PC-9 (cell line): ENCODE measurements at regions of chr14 and their contacts with region 1.

Region 1: DNA sequence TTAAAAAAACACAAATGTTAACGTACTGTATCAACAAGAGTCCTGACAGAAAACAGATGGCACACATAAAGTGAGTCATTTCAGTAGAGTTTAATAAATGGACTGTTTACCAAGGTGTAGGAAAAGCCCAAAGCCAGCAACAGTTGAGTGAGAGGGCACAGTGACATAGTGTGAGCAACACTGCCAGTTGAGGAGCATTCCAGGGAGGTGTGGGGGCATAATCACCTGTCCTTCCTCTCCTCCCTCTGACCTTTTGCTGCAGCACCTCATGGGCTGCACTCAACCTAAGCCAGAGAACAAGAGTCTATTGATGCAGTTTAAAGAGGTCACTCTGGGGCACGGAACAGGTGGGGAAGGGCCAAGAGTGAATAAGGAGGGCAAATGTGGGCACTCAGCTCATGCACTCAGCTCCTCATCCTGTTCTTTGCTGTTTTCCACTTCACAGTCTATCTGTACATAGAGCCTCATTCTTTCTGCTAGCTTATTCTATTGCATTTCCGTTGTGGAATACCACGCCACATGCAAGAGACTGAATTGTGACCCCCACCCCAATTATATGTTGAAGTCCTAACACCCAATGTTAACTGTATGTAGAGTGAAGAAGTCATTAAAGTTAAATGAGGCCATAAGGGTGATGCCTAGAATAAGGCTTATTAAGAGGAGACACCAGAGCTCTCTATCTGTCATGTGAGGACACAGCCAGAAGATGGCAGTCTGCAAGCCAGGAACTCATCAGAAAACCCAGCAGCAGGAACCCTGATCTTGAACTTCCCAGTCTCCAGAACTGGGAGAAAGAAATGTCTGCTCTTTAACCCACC is 29.4 kb downstream of the DHRS2 start:
- DNase-seq: peak; percentile 37 to 73
- H3K4me3 ChIP-seq: no peak overlapping the region
- H3K27ac ChIP-seq: peak overlapping the region; percentile 63
- H3K4me1 ChIP-seq: peaks cover 31% of the 10 kb centered on the region
- H3K27me3 ChIP-seq: no peaks in the 10 kb centered on the region
- CTCF ChIP-seq: peak; percentile 66

Region 2: DNA sequence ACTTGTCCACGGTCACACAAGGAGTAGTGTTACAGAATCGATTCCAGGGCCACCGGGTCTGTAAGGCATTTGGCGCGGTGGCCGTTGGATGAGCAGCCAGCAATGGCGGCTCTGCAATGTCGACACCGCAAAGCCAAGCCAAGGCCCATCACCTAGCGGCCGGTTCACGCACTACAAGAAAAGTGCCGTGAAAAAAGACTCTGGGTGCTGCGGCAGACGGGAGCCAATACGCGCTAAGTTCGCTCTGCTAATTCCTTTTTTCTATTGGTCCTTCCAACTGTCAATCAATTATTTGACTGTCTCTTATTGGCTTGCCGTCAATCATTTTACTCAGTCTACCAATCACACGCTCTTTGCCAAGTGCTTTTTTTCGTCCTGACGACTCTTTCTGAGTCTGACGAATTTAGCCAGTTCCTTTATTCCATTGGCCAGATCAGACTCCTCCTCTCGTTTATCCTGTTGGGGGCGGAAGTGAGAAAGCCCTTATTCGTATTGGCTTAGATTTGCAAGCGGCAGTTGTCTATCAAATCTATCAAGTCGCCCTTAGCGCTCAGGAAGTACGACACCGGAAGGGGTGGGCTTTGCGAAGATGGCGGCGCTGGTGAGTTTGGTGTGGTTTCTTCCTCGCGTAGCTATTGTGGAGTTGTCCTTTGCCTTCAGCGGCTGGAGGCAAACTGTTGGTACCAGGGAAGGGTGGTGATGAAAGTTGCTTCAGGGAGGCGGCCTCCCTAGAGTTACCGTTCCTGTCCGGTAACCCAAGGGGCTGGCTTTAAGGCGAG is 196.3 kb before region 1 on chr14 and contains the start of gene NGDN:
- CTCF ChIA-PET with region 1: no interaction called
- POLR2A ChIA-PET with region 1: no interaction called
- intact Hi-C with region 1: no loop called
- DNase-seq: peak; percentile 82 to 98
- H3K4me3 ChIP-seq: peak within 1 kb of the TSS; percentile 65
- H3K27ac ChIP-seq: peak within 1 kb of the TSS; percentile 35; the same call in 1 of the 2 replicates
- H3K4me1 ChIP-seq: peaks cover 5% of the 10 kb centered on the region
- H3K27me3 ChIP-seq: no peaks in the 10 kb centered on the region
- CTCF ChIP-seq: peak; percentile 73
- total RNA-seq, gene NGDN: 23.1 and 27.6 TPM in 2 replicates

Region 3: DNA sequence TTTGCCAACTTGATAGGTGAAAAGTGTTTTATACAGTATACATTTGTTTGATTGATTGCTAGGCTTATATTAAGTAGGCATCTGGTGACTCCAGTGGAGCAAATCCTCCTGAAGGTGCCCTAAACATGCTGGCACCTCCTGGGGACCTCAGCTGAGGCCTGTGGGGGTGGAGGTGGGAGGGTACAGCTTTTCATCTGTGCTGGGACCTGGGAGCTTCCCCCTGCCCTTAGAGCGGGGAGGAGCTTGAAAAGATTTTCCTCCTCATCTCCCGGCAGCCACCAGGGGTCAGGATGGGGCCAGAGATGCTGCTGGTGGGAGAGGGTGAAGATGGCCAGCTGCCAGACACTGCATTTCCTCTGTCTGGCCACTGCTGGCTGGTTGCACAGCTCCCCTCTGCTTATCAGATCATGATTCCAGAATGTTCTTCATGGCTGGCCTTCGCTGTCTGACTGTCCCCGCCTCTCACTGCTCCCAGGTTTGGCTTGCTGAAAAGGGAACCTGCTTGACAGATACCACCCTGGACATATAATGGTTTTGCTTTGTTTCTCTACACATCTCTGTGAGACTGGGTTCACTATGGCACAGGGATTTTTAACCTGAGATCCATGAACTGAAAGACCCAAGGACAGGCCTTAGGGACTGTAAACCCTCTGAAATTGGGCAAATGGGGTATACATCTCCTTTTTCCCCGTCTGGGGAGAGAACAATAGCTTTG is 76.5 kb before region 1 on chr14:
- CTCF ChIA-PET with region 1: interaction called, 6 read pairs
- POLR2A ChIA-PET with region 1: no interaction called
- intact Hi-C with region 1: loop called (anchors 2 kb)
- DNase-seq: peak; percentile 62 to 83
- H3K4me3 ChIP-seq: no peak overlapping the region
- H3K27ac ChIP-seq: no peak overlapping the region
- H3K4me1 ChIP-seq: peaks cover 7% of the 10 kb centered on the region; the same call in 1 of the 2 replicates
- H3K27me3 ChIP-seq: no peaks in the 10 kb centered on the region
- CTCF ChIP-seq: peak; percentile 78

Region 4: GRCh38 chr14:23631702-23632460 is 33.7 kb before region 1 on chr14:
- CTCF ChIA-PET with region 1: interaction called, 9 read pairs
- POLR2A ChIA-PET with region 1: no interaction called
- intact Hi-C with region 1: loop called (anchors 5 kb)
- DNase-seq: peak; percentile 37 to 70
- H3K4me3 ChIP-seq: no peak overlapping the region
- H3K27ac ChIP-seq: no peak overlapping the region
- H3K4me1 ChIP-seq: peaks cover 8% of the 10 kb centered on the region
- H3K27me3 ChIP-seq: no peaks in the 10 kb centered on the region
- CTCF ChIP-seq: peak; percentile 89

Region 5: DNA sequence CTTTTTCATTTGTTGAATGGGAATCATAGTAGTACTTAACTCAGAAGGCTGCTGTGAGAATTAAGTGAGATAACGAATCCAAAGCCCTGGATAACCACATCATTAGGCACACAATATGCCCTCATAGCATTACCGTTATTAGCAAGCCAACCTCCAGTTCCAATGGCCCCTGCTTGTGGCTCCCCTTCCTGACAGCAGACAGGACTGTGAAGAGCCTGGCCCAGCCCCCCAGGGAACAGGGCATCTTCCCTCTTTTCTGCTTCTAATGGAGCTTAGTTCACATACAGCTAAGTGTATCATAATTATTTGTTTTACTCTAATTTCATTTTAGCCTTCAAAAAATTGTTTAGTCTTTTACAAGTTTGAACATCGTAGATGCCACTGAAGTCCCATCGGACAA is 10.3 kb after region 1 on chr14:
- CTCF ChIA-PET with region 1: interaction called, 20 read pairs
- POLR2A ChIA-PET with region 1: no interaction called
- intact Hi-C with region 1: no loop called
- DNase-seq: no peak
- H3K4me3 ChIP-seq: no peak overlapping the region
- H3K27ac ChIP-seq: no peak overlapping the region
- H3K4me1 ChIP-seq: no peaks in the 10 kb centered on the region
- H3K27me3 ChIP-seq: no peaks in the 10 kb centered on the region
- CTCF ChIP-seq: no peak

Region 6: DNA sequence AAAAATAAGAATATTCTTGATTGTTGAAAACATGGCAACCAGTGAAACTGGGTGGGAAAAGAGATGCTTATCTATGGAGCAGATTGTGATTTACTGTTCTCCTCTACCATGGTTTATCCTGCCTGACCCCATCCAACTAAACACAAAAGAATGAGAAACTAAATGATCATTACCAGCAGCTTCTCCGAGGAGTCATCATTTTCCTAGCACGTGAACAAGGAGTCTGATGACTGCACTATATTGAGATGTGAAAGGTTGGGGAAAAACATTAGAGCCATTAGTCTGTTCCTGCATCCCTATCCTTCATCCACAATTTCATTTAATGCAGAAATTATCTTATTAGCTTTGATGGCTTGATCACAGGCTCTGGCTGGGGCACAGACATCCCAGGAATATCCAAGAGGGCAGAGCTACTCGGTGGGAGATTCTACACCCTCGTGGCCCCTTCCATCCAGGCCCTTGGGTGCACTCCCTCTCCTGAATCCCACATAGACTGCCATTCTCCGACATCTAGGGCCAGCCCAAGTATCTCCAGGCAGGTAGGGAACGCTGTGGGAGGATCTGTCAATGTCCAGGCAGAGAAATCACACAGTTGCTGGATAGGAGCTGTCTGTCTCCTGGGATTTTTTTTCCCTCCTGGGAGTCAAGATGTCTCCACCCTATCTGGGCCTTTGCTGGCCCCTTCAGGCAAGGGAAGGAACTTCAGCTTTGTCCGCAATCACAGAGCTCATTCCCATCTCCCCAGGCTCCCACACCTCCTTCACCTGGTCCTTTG is 244.7 kb after region 1 on chr14:
- CTCF ChIA-PET with region 1: interaction called, 11 read pairs
- POLR2A ChIA-PET with region 1: no interaction called
- intact Hi-C with region 1: loop called (anchors 1 kb)
- DNase-seq: peak in 1 of 2 experiments; percentile 56
- H3K4me3 ChIP-seq: no peak overlapping the region
- H3K27ac ChIP-seq: no peak overlapping the region
- H3K4me1 ChIP-seq: no peaks in the 10 kb centered on the region
- H3K27me3 ChIP-seq: no peaks in the 10 kb centered on the region
- CTCF ChIP-seq: peak; percentile 78

Region 7: GRCh38 chr14:23929822-23930294 is 264.3 kb after region 1 on chr14:
- CTCF ChIA-PET with region 1: interaction called, 5 read pairs
- POLR2A ChIA-PET with region 1: no interaction called
- intact Hi-C with region 1: loop called (anchors 1 kb)
- DNase-seq: peak in 1 of 2 experiments; percentile 47
- H3K4me3 ChIP-seq: no peak overlapping the region
- H3K27ac ChIP-seq: no peak overlapping the region
- H3K4me1 ChIP-seq: no peaks in the 10 kb centered on the region
- H3K27me3 ChIP-seq: no peaks in the 10 kb centered on the region
- CTCF ChIP-seq: peak; percentile 89

Region 8: GRCh38 chr14:24093901-24094761 is 428.5 kb after region 1 on chr14 and contains the start of gene PCK2:
- CTCF ChIA-PET with region 1: no interaction called
- POLR2A ChIA-PET with region 1: no interaction called
- intact Hi-C with region 1: no loop called
- DNase-seq: peak; percentile 83 to 93
- H3K4me3 ChIP-seq: peak within 1 kb of the TSS; percentile 78
- H3K27ac ChIP-seq: peak within 1 kb of the TSS; percentile 83
- H3K4me1 ChIP-seq: peaks cover 12% of the 10 kb centered on the region
- H3K27me3 ChIP-seq: no peaks in the 10 kb centered on the region
- CTCF ChIP-seq: no peak
- total RNA-seq, gene PCK2: 77.4 and 113 TPM in 2 replicates

Region 9: DNA sequence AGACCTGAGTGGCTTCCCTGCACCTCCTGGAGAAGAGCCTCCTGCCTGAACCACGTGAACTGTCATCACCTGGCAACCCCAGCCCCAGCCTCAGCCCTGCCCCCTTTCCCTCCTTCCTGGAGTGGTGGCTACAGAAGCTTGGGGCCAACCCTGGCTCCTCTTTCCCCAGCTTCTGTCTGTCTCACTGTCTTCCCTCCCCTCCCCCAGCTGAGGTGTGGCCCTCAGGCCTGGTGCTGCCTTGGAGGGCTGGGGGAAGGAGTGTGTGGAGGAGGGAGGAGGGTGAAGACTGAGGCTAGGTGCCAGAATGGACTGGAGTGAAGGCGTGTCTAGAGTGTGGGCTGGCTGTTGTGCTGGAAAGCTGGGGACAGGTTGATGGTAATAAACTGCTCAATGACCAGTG is 712.1 kb after region 1 on chr14:
- CTCF ChIA-PET with region 1: no interaction called
- POLR2A ChIA-PET with region 1: no interaction called
- intact Hi-C with region 1: no loop called
- DNase-seq: peak in 1 of 2 experiments; percentile 24
- H3K4me3 ChIP-seq: no peak overlapping the region
- H3K27ac ChIP-seq: no peak overlapping the region
- H3K4me1 ChIP-seq: no peaks in the 10 kb centered on the region
- H3K27me3 ChIP-seq: no peaks in the 10 kb centered on the region
- CTCF ChIP-seq: no peak